Activated T-helper 2 cell treated with anti-CD3 and anti-CD28 coated beads, Interferon-gamma antibody, Interleukin-2, Interleukin-4, amounts not matched to agents 10 μg/mL and 5 μg/mL and 100 μg/mL, durations not matched to agents 14 hours and 24 hours and 36 hours (primary cell): ENCODE measurements at regions of chr5 and their contacts with region 1.

Region 1: DNA sequence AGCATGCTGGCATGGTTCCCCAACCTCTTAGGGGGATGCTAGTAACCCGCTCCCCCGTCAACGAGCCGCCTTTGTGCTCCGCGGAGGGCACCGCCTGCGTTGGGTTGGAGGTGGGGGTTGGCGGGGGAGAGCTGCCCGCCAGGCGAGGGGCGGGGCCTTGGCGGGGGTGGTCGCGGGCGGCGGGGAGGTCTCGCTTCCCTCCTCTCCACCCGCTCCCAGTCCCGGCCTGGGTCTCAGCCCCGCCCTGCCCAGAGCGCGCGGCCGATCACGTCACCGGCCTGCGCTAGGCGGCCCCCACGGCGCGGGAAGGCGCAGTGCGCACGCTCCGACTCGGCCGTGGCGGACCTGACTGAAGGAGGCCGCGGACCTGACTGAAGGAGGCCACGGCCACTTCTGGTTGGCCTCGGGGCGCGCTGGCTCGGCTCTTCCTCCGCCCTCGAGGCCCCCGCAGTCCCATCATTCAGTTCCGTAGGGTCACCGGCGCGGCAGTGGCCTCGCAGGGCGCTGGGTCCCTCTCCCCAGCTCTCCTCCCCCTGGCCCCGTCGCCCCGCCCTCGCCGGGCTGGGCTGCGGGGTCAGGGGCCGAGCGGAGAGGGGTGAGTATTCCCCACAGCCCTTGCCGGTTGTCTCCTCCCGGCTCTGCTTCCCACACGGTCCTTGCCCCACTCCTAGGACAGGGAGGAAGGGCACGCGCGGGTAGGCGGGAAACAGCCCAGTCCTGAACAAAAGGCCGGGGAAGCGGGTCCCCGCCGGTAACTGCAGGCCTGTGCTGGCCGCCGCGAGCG is at the start of gene ATG10:
- DNase-seq: peak; percentile 86
- H3K4me3 Mint-ChIP-seq: peak within 1 kb of the TSS; percentile 87
- H3K27ac Mint-ChIP-seq: peak within 1 kb of the TSS; percentile 99
- H3K4me1 Mint-ChIP-seq: peaks cover 31% of the 10 kb centered on the region
- H3K27me3 Mint-ChIP-seq: no peaks in the 10 kb centered on the region
- total RNA-seq, gene ATG10: 7.7 and 8.9 TPM in 2 replicates

Region 2: DNA sequence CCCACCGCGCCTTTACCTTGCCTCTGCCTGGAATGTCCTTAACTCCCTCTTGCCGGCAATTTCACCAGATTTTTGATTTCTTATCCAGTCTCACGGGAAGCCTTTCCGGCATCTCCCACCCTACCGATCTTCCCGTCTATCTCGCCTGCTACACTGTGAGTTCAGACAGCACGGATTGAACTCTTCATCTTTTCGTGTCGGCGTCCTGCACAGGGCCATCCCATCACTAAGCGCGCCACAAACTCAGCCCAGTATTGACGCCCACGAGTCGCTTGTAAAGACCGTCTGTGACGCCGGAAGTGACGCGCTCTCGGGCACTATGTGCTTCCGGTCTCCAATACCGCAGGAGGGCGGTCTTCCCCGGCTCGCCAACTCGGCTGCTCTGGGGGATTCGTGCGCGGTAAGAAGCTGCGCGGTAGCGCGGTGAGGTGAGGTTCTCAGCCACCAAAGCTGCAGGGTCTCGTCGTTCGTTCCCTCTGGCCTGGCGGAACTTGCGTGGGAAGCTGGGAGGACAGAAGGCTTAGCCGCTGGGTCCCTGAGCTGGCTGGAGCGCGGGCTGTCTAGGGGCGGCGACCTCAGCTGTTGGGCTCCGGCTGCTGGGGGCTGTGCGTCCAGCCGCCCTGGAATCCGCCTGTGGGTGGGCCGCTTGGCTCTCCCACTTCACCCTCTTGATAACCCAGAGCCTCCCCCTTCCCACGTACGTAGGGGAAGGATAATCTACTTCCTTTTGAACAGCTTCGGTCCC is 670.5 kb before region 1 on chr5 and contains the start of gene ZCCHC9:
- intact Hi-C with region 1: loop called (anchors 5 kb)
- DNase-seq: peak; percentile 90
- H3K4me3 Mint-ChIP-seq: peak within 1 kb of the TSS; percentile 92
- H3K27ac Mint-ChIP-seq: peak within 1 kb of the TSS; percentile 95
- H3K4me1 Mint-ChIP-seq: peaks cover 46% of the 10 kb centered on the region
- H3K27me3 Mint-ChIP-seq: no peaks in the 10 kb centered on the region
- total RNA-seq, gene ZCCHC9: 43.4 and 46.9 TPM in 2 replicates

Region 3: GRCh38 chr5:81506900-81507588 is 464.9 kb before region 1 on chr5:
- intact Hi-C with region 1: loop called (anchors 5 kb)
- DNase-seq: peak; percentile 32
- H3K4me3 Mint-ChIP-seq: no peak overlapping the region
- H3K27ac Mint-ChIP-seq: no peak overlapping the region
- H3K4me1 Mint-ChIP-seq: peaks cover 11% of the 10 kb centered on the region
- H3K27me3 Mint-ChIP-seq: no peaks in the 10 kb centered on the region

Region 4: DNA sequence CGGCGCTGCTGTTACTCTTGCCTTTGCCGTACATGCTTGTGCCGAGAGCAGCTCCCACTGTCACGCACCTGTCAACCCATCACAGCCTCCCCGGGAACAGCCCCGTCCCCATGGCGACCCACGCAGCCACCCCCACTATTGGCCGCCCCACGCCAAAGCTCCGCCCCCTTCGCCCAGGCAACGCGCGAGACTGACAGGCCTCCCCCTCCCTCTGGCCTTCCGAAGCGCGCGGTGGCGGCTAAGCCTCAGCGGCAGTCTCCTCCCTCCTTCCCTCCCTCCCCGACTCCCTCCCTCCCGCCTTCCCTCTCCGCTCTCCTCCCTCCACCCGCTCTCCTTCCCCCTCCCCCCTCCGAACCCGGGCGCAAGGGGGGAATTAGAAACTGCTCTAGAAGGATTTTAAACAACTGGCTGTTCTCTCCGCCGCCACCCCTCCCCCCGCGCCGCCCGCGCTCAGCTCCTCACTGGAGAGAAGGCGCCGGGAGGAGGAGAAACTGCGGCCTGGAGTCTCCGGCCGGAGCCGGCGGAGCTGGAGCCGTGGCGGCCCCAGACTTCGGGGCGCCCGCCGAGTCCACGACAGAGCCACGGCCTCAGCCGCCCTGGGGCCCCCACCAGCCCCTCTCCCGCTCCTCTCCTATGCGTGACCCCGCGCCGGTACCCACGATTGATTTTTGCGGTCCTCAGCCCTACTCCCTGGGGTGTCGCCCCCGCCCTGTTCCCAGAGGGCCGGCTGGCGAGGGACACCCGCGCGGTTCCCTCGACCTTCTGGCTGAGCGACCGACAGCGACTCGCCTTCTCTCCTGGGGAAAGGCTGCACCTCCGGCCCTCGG is 220.7 kb before region 1 on chr5 and contains the start of gene SSBP2:
- intact Hi-C with region 1: loop called (anchors 1 kb)
- DNase-seq: peak; percentile 99
- H3K4me3 Mint-ChIP-seq: peak within 1 kb of the TSS; percentile 92
- H3K27ac Mint-ChIP-seq: peak within 1 kb of the TSS; percentile 93
- H3K4me1 Mint-ChIP-seq: peaks cover 30% of the 10 kb centered on the region
- H3K27me3 Mint-ChIP-seq: peaks cover 15% of the 10 kb centered on the region
- total RNA-seq, gene SSBP2: 24.3 and 29.5 TPM in 2 replicates

Region 5: DNA sequence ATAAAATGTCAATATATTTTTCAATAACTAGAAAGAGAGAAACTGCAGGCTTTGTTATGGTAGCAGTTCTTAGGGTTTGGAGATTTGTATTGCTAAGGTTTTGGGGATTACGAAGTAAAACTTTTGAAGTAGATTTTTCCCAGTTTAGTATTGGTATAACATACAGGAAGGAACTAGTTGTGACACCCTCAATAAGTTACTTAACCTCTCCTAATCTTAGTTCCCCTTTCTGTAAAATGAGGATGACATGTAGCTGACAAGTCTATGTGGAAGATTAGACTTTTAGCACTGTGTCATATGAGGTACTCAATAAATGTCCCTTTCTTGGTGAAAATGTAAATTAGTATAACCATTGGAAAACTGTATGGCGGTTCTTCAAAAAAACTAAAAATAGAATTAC is 73.5 kb before region 1 on chr5:
- intact Hi-C with region 1: no loop called
- DNase-seq: no peak
- H3K4me3 Mint-ChIP-seq: no peak overlapping the region
- H3K27ac Mint-ChIP-seq: no peak overlapping the region
- H3K4me1 Mint-ChIP-seq: no peaks in the 10 kb centered on the region
- H3K27me3 Mint-ChIP-seq: no peaks in the 10 kb centered on the region

Region 6: DNA sequence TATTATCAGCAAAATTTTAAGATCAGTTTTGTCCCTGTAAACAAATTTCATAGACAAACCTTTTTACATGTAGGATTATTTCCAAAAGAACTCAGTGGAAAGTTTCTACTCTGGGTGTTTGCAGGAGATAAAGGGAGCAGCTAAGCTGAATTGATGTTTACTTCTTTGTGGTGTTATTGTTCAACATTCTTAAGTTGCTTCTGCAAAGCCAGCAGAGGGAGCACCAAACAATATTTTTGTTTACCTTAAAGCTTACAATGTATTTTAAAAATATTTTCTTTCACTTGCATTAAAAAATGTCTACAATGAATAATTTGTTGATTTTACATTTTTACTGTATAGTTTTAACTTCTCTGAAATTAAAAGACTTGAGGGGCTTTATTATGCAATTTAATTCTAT is 135.4 kb after region 1 on chr5:
- intact Hi-C with region 1: loop called (anchors 1 kb)
- DNase-seq: no peak
- H3K4me3 Mint-ChIP-seq: no peak overlapping the region
- H3K27ac Mint-ChIP-seq: no peak overlapping the region
- H3K4me1 Mint-ChIP-seq: peaks cover 22% of the 10 kb centered on the region
- H3K27me3 Mint-ChIP-seq: no peaks in the 10 kb centered on the region

Region 7: DNA sequence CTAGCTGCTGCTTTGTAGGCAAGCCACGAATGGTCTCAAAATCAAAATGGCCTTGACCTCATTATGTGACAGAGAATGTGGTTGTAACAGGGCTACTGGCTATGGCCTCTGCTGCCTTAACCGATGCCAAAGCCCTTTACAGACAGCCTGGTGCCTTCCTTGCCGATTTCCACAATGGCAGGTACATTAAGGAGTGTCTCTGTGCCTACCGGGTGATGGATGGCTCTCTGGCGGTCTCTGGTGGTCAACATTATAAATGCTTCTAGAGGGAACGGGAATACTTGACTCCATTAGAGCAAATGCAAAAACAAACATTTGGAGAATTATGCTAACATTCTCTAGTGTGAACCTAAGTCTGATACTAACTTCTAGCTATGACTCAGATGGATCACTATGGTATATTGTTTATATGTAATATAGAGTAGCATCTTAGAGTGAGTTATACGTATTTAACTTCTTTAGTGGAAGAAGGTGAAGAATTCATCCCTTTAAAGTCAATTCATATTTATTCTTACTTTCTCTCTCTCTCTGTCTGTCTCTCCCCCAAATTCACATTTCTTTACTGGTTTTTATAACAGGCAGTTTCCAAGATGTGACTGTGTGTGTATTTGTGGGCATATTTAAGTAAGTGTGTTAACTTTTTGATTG is 253.7 kb after region 1 on chr5:
- intact Hi-C with region 1: no loop called
- DNase-seq: peak; percentile 45
- H3K4me3 Mint-ChIP-seq: no peak overlapping the region
- H3K27ac Mint-ChIP-seq: no peak overlapping the region
- H3K4me1 Mint-ChIP-seq: peaks cover 7% of the 10 kb centered on the region
- H3K27me3 Mint-ChIP-seq: no peaks in the 10 kb centered on the region

Region 8: DNA sequence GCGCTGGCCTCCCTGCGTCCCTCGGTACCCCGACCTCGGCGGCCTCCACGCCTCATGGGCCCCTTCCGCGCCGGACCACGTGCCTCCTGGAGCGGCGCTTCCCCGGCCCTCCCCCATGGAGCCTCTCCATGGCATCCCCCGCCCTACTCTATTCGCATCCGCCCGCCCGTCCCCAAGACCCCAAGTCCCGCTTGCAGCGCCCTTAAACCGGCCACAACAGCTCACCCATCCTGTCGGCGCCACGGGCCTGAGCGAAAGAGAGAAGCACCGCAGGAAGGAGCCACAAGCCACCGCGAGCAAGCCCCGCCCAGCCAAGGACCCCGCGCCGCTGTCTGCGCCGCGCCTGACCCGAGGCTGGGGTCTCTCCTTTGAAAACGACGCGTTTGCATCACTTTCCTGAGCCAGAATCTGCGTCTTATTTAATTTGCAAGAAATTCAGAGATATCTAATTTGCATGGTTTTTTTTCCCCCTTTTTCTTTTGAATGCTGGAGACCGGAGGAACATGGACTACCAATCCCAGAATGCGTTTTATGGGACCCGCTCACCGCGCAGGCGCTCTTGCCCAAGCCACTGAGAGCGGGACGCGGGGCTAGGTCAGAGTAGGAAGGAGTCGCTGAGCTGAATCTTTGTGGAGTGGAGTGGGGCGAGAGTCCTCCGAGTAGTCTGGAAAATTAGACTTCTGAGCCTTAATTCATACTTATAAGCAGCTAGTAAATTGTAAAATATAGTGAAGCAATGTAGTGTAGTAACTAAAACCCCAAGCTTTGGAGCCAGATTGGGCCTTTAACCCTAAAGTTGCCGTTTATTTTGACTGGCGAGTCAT is 306.4 kb after region 1 on chr5 and contains the start of gene RPS23:
- intact Hi-C with region 1: loop called (anchors 5 kb)
- DNase-seq: peak; percentile 82
- H3K4me3 Mint-ChIP-seq: peak within 1 kb of the TSS; percentile 92
- H3K27ac Mint-ChIP-seq: peak within 1 kb of the TSS; percentile 97
- H3K4me1 Mint-ChIP-seq: peaks cover 35% of the 10 kb centered on the region
- H3K27me3 Mint-ChIP-seq: no peaks in the 10 kb centered on the region
- total RNA-seq, gene RPS23: 2,718 and 2,741 TPM in 2 replicates